Activated T-helper 1 cell treated with anti-CD3 and anti-CD28 coated beads, Interleukin-12 subunit alpha, Interleukin-12 subunit beta, Interleukin-2, Interleukin-4 antibody, amounts not matched to agents 30 ng/mL and 10 ng/mL and 1 ng/mL, durations not matched to agents 14 hours and 24 hours and 36 hours (primary cell): ENCODE measurements at regions of chr17 and their contacts with region 1.

Region 1: GRCh38 chr17:43940630-43941029 is 1.6 kb downstream of the PPY start:
- DNase-seq: peak; percentile 4
- H3K4me3 Mint-ChIP-seq: no peak overlapping the region
- H3K27ac Mint-ChIP-seq: no peak overlapping the region
- H3K4me1 Mint-ChIP-seq: peaks cover 12% of the 10 kb centered on the region
- H3K27me3 Mint-ChIP-seq: peaks cover 17% of the 10 kb centered on the region

Region 2: DNA sequence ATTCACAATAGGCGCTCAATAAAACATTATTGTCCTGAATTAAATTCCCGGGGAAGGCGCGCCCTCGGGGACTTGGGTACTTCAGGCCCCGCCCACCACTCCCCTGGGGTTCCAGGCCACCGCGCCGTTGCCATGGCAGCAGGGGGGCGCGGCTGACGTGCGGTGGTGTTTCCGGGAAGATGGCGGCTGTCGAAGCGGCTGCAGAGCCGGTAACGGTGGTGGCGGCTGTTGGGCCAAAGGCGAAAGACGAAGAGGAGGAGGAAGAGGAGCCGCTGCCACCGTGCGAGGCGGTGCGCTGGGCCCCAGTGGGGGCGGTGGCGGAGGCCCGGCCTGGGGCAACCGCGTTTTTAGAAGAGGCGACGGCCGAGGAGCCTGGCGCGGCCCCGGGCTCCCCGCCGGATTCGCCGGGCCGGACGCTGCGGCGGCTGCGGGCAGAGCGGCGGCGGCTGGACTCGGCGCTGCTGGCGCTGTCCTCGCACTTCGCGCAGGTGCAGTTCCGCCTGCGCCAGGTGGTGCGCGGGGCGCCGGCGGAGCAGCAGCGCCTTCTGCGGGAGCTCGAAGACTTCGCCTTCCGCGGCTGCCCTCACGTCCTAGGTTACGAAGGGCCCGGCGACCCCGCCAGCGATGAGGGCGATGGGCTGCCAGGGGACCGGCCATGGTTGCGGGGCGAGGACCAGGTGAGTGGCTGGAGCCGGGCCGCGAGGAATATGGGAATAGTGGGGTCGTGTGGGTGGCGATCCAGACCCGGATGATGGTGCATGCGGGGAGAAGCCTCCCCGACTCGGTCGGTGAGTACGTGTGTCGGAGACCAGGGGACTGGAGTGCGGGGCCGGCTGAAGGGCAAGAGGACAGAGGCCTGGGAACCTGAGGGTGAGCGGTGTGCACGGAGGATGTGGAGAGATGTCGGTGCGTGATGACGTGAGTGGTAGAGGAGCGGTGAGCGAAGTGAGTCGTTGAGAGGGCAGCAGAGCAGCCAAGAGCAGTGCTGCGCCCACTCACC is 959.9 kb before region 1 on chr17 and contains the start of gene RUNDC1:
- intact Hi-C with region 1: no loop called
- DNase-seq: peak; percentile 87
- H3K4me3 Mint-ChIP-seq: peak within 1 kb of the TSS; percentile 100
- H3K27ac Mint-ChIP-seq: peak within 1 kb of the TSS; percentile 99
- H3K4me1 Mint-ChIP-seq: peaks cover 42% of the 10 kb centered on the region
- H3K27me3 Mint-ChIP-seq: peaks cover 2% of the 10 kb centered on the region
- total RNA-seq, gene RUNDC1: 16.9 and 18.8 TPM in 2 replicates

Region 3: GRCh38 chr17:43891851-43892646 is 48.6 kb before region 1 on chr17:
- intact Hi-C with region 1: no loop called
- DNase-seq: no peak
- H3K4me3 Mint-ChIP-seq: no peak overlapping the region
- H3K27ac Mint-ChIP-seq: no peak overlapping the region
- H3K4me1 Mint-ChIP-seq: no peaks in the 10 kb centered on the region
- H3K27me3 Mint-ChIP-seq: peaks cover 10% of the 10 kb centered on the region

Region 4: DNA sequence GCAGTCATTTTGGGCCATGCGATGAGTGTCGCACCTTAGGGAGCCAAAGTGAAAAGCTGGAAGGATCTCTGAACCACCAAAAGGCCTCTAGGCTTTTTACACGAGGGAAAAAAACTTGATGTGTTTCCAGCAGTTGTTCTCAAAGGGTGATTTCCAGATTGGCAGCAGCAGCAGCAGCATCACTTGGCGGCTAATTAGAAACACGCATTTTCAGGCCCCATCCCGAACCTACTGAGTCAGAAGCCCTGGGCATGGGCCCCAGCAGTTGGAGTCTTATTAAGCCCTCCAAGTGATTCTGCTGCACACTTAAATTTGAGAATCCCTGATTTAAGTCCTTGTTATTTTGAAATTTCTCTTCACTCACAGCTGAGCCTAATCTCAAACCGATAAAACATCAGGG is 38.4 kb after region 1 on chr17:
- intact Hi-C with region 1: no loop called
- DNase-seq: no peak
- H3K4me3 Mint-ChIP-seq: no peak overlapping the region
- H3K27ac Mint-ChIP-seq: no peak overlapping the region
- H3K4me1 Mint-ChIP-seq: no peaks in the 10 kb centered on the region
- H3K27me3 Mint-ChIP-seq: peaks cover 58% of the 10 kb centered on the region

Region 5: DNA sequence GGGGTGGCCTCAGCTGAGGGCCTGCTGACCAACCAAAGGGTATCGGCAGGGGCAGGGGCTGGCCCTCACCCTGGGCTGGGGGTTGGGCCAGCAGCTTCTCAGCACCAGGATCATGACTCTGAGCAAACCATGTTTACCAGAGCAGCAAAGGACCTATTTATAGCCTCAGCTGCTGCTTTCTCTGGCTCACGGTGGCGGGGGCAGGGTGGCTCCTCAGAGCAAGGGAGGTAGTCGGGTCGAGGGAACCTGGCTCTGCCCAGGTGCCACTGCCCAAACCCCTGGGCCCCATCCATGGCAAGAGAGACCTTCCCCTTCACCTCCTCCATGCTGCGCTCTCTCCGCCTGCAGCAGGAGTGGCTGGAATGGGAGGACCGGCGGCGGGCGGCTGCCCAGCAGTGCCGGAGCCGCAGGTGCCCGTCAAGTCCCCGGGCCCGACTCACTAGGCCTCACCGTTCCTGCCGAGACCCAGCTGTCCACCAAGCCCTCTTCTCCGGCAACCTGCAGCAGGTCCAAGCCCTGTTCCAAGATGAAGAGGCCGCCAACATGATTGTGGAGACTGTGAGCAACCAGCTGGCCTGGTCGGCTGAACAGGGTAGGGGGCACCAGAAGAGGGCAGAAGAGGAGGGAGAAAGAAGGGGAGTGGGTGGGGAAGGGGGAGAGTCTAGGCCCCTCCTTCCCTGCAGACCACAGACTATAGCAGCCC is 230.0 kb after region 1 on chr17 and contains the start of gene ASB16:
- intact Hi-C with region 1: loop called (anchors 1 kb)
- DNase-seq: no peak
- H3K4me3 Mint-ChIP-seq: no peak within 1 kb of the TSS
- H3K27ac Mint-ChIP-seq: no peak within 1 kb of the TSS
- H3K4me1 Mint-ChIP-seq: peaks cover 10% of the 10 kb centered on the region
- H3K27me3 Mint-ChIP-seq: no peaks in the 10 kb centered on the region
- total RNA-seq, gene ASB16: 0.31 and 0.42 TPM in 2 replicates